BJ (cell line): ENCODE measurements at regions of chr11 and their contacts with region 1.

Region 1: DNA sequence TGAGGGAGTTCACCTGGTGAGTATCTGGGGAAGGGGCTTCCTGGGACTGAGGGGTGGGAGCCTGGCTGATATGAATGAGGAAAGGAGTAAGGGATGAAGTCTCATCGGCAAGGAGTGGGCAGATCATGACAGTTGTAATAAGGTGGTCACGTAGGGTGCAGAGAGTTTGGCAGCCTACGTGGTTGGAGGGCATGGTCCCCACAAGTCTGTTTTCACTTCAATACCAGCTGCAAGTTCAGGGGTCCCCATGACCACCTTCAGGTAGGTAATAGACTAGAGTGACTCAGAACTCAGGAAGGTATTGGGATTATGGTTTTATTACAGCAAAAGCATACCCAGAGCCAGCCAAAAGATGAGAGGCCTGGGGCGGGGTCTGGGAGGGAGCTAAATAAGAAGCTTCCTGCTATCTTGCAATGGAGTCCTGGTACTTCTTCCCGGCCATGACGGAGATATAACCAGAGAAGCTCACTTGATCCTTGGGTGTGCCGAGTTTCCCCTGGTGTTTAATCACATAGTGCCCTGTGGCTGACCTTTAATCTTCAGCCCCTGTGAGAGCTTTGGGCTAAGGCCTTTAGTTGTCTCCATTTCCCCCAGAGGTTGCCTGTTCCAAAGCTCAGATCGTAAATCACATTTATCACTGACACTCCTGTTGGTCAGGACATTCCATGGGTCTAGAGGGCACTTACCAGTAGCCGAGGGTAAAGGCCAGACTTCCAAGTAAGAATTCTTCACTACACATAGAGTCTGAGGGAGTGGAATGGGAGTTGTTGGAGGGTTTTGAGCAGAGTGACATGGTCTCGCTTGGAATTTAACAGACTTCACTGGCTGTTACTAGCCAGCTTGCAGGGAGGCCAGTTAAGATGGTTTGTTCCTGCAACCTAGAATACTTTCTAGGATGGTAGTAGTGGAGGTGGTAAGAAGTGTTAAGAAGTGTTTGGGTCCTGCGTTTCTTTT is 9.1 kb downstream of the SLC3A2 start:
- DNase-seq: no peak
- H3K4me3 ChIP-seq: no peak overlapping the region
- H3K27me3 ChIP-seq: no peaks in the 10 kb centered on the region
- CTCF ChIP-seq: no peak

Region 2: DNA sequence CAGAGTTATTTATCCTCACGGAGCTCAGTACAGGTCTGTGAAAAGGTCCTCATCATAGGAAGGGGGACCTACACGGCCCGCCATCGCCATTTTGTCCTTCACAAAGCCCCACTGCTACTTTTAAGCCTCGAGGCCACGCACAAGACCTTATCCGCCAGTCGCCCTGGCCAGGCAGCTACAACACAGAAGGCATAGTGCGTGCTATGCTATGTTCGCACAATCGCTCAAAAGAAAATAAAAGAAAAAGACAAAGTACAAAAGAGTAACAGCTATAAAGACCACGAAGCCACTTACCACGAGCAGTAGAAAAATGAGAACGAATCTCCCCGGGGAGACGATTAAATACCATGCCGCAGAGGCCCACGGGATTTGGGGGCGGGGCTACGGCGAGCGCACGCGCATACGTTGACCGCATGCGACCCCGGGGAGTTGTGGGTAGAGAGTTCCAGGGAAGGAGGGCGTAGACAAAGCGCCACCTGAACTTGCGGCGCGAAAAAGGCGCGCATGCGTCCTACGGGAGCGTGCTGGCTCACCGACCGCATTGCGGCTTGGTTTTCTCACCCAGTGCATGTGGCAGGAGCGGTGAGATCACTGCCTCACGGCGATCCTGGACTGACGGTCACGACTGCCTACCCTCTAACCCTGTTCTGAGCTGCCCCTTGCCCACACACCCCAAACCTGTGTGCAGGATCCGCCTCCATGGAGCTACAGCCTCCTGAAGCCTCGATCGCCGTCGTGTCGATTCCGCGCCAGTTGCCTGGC is 34.0 kb before region 1 on chr11:
- CTCF ChIA-PET with region 1: interaction called, 3 read pairs
- POLR2A ChIA-PET with region 1: interaction called, 20 read pairs
- DNase-seq: peak; percentile 86
- H3K4me3 ChIP-seq: peak overlapping the region; percentile 67
- H3K27me3 ChIP-seq: no peaks in the 10 kb centered on the region
- CTCF ChIP-seq: no peak

Region 3: GRCh38 chr11:62922658-62923431 is 33.1 kb after region 1 on chr11:
- CTCF ChIA-PET with region 1: no interaction called
- POLR2A ChIA-PET with region 1: no interaction called
- DNase-seq: no peak
- H3K4me3 ChIP-seq: no peak overlapping the region
- H3K27me3 ChIP-seq: peaks cover 19% of the 10 kb centered on the region
- CTCF ChIP-seq: peak; percentile 37; the same call in 1 of the 2 replicates